Head of caudate nucleus (tissue), 42 donors: ENCODE measurements at regions of chr11 and their contacts with region 1.

Region 1: GRCh38 chr11:110453684-110454354 is 24.1 kb downstream of the FDX1 start:
- DNase-seq: no peak

Region 2: GRCh38 chr11:110429731-110430266 is 24.0 kb before region 1 on chr11 and contains the start of gene FDX1:
- intact Hi-C with region 1: no loop called
- DNase-seq: peak; percentile 54 to 91 (median 82)

Region 3: GRCh38 chr11:111446404-111447111 is 992.7 kb after region 1 on chr11:
- intact Hi-C with region 1: loop called (anchors 10 kb)
- DNase-seq: peak; percentile 56 to 94 (median 84)